Heart left ventricle (tissue), 16 donors: ENCODE measurements at regions of chr14 and their contacts with region 1.

Region 1: GRCh38 chr14:44897045-44897844 is 64.5 kb downstream of the KLHL28 start:
- DNase-seq: peak; percentile 97 to 99 (median 98)
- ATAC-seq: peak; percentile 99
- H3K4me3 ChIP-seq: peak overlapping the region; percentile 73 to 97 (median 90)
- H3K27ac ChIP-seq: peak overlapping the region; percentile 94 to 100 (median 99)
- H3K4me1 ChIP-seq: peaks cover 0 to 34% (median 16%) of the 10 kb centered on the region in 12 donors
- H3K27me3 ChIP-seq: no peaks in the 10 kb centered on the region
- CTCF ChIP-seq: peak in 1 of 12 donors; percentile 4
- POLR2A ChIP-seq: peak in 1 of 2 donors; percentile 74

Region 2: GRCh38 chr14:44951051-44951450 is 53.8 kb after region 1 on chr14:
- intact Hi-C with region 1: loop called in 1 of 10 experiments (anchors 10 kb)
- DNase-seq: no peak
- ATAC-seq: peak in 1 of 4 donors; percentile 13
- H3K4me3 ChIP-seq: no peak overlapping the region
- H3K27ac ChIP-seq: no peak overlapping the region
- H3K4me1 ChIP-seq: peaks cover 0 to 24% (median 5%) of the 10 kb centered on the region in 12 donors
- H3K27me3 ChIP-seq: no peaks in the 10 kb centered on the region
- CTCF ChIP-seq: no peak
- POLR2A ChIP-seq: no peak

Region 3: GRCh38 chr14:45083971-45084722 is 186.9 kb after region 1 on chr14 and contains the start of gene PRPF39:
- intact Hi-C with region 1: loop called in 1 of 10 experiments (anchors 5 kb)
- DNase-seq: peak; percentile 95 to 97 (median 96)
- ATAC-seq: peak; percentile 99 to 100 (median 99)
- H3K4me3 ChIP-seq: peak within 1 kb of the TSS; percentile 59 to 85 (median 76)
- H3K27ac ChIP-seq: peak within 1 kb of the TSS; percentile 35 to 91 (median 80)
- H3K4me1 ChIP-seq: peaks cover 0 to 51% (median 31%) of the 10 kb centered on the region in 12 donors
- H3K27me3 ChIP-seq: no peaks in the 10 kb centered on the region
- CTCF ChIP-seq: no peak
- POLR2A ChIP-seq: peak in 1 of 2 donors; percentile 84
- total RNA-seq, gene PRPF39: 5.9 to 17.0 (median 13.3) TPM

Region 4: DNA sequence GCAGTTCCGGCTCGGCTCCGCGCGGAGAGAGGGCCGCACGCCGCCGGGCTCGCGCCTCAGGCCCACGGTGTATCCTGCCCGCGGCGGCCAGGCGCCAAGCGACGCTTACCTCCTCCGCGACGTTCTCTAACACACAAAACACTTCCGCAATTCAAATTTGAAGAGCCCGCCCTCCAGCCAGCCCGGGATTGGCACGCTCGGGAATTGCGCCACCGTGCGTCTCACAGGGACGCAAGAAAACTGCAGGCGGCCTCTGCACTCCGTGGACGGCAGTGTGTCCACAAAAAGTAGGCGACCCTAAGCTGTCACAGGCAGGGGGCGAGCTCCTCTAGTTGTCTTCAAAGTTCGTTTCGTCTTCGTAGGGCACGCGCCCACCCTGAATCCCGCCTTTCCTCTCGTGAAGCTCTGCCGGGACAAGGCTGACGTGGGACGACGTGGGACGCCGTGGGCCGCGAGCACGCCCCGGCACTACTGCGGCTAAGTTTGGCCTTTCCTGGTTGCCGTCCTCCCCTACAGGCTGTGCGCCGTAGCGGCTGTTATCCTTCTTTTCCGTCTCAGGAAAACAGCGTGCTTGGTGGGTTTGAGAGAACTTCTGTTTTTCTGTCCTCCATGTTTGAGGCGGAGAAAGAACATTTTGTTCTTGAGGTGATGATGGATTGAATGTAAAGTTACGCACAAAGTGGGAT is 356.0 kb after region 1 on chr14 and contains the start of gene MIS18BP1:
- intact Hi-C with region 1: loop called in 4 of 10 experiments (anchors 2 to 5 kb)
- DNase-seq: peak; percentile 96 to 97 (median 97)
- ATAC-seq: peak; percentile 96 to 98 (median 97)
- H3K4me3 ChIP-seq: peak within 1 kb of the TSS; percentile 55 to 88 (median 78)
- H3K27ac ChIP-seq: peak within 1 kb of the TSS; percentile 87 to 98 (median 93)
- H3K4me1 ChIP-seq: peaks cover 0 to 53% (median 20%) of the 10 kb centered on the region in 12 donors
- H3K27me3 ChIP-seq: no peaks in the 10 kb centered on the region
- CTCF ChIP-seq: peak; percentile 63 to 97 (median 83)
- POLR2A ChIP-seq: peak in 1 of 2 donors; percentile 34
- total RNA-seq, gene MIS18BP1: 4.1 to 22.0 (median 7.1) TPM